Right ventricle myocardium inferior (tissue), 1 donor: ENCODE measurements at regions of chr2 and their contacts with region 1.

Region 1: GRCh38 chr2:40448468-40449079 is 3.3 kb downstream of the SLC8A1 start:
- DNase-seq: no peak
- ATAC-seq: no peak

Region 2: GRCh38 chr2:40062381-40062780 is 386.2 kb before region 1 on chr2:
- intact Hi-C with region 1: no loop called
- DNase-seq: no peak
- ATAC-seq: no peak

Region 3: DNA sequence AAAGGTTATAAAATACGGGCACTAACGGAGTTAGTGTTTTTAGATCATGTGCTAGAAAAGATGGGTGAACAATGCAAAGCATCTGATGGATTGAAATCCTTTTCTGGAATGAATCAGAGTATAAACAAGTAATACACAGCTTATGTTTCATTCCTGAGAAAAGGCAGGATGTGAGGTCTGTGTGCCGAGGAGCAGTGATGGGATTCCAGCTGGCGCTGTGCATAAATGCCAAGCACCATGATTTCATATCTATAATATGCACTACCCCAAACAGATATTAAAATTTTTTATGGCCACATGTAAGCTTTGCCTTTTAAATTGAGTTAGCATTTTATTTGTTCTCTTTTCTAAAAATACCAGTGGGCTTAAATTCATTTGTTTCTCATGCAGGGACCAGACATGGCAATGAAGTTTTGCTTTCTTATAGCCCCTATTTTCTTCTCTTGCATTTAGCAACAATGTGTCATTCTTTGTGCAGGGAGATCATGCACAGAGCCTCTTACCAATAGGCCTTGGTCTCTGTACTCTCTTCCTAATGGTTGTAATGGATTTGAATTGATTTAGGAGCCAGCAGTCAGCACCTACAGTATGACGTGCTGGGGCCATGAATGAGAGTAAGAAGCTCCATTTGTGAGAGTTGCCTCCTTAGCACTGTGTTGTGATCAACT is 320.6 kb before region 1 on chr2:
- intact Hi-C with region 1: loop called (anchors 10 kb)
- DNase-seq: no peak
- ATAC-seq: no peak

Region 4: GRCh38 chr2:40281021-40281940 is 167.3 kb before region 1 on chr2:
- intact Hi-C with region 1: loop called (anchors 5 kb)
- DNase-seq: no peak
- ATAC-seq: peak; percentile 81

Region 5: GRCh38 chr2:40511661-40512213 is 63.2 kb after region 1 on chr2:
- intact Hi-C with region 1: loop called (anchors 5 kb)
- DNase-seq: no peak
- ATAC-seq: peak; percentile 56

Region 6: GRCh38 chr2:40534528-40534927 is 86.0 kb after region 1 on chr2:
- intact Hi-C with region 1: no loop called
- DNase-seq: no peak
- ATAC-seq: no peak